ENCODE measurements at regions of chr5 and their contacts with region 1.

Region 1: DNA sequence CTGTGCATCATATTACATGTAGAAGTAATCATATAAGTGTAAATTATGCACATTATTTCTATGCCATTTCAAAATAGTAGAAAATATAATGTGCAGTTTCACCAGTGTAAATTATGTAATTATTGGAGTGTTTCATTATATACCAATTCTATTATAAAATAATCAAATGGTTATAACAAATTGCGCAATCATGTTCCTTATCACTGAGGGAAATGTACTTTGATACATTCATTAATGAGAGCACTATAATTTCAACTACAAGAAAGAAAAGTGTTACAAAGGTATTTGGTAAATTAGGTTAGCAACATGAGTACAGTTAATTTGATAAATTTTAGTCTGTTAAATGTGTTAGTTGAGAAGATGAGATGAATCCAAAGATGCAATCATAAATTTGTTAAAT is 421.5 kb upstream of the CDH10 start:
- DNase-seq: no peak
- H3K4me3 ChIP-seq: no peak overlapping the region
- H3K27ac ChIP-seq: no peak overlapping the region
- H3K4me1 ChIP-seq: no peaks in the 10 kb centered on the region
- H3K27me3 ChIP-seq: no peaks in the 10 kb centered on the region
- CTCF ChIP-seq: no peak

Region 2: DNA sequence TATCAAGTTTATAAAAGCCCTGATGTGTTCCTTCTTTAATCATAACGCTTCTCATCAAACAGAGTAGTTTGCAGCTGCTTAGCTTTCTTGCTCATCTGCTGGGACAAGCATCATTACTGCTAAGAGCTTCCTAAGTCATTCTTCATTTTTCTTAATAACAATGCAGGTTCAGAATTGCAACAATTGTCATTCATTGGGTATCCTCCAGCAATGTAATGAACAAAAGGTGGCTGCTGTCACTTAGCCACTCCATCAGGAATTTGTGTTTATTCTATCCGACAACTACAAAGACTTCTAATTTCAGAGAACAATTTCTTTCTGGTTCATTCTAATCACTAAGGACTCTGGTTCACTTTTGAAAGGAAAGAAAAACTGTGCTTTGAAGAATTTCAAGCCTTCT is 415.2 kb after region 1 on chr5:
- CTCF ChIA-PET with region 1: no interaction called
- POLR2A ChIA-PET with region 1: no interaction called
- intact Hi-C with region 1: no loop called
- DNase-seq: no peak
- H3K4me3 ChIP-seq: no peak overlapping the region
- H3K27ac ChIP-seq: no peak overlapping the region
- H3K4me1 ChIP-seq: no peaks in the 10 kb centered on the region
- H3K27me3 ChIP-seq: no peaks in the 10 kb centered on the region
- CTCF ChIP-seq: no peak

Region 3: DNA sequence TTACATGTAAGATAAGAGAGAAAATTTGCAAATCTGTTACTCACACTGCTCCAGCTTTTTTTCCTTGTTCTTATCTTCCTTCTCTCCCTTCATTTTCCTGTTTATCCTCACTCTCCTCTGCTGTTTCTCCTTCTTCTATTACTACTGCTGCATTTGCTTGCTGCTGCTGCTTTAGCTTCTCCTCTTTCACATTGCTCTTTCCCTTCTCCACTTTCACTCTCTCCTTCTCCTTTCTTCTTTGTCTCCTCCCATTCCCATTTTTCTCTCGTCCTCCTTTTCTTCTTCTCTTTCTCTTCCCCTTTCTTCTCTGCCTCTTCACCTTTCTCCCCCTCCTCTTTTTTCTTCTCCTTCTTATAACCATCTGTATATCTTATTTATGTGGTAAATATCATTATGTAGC is 1683.6 kb after region 1 on chr5:
- CTCF ChIA-PET with region 1: interaction called, 13 read pairs
- POLR2A ChIA-PET with region 1: no interaction called
- intact Hi-C with region 1: no loop called
- DNase-seq: no peak
- H3K4me3 ChIP-seq: no peak overlapping the region
- H3K27ac ChIP-seq: no peak overlapping the region
- H3K4me1 ChIP-seq: no peaks in the 10 kb centered on the region
- H3K27me3 ChIP-seq: no peaks in the 10 kb centered on the region
- CTCF ChIP-seq: no peak

Measured in PC-9 (cell line).